Activated B cell treated with CpG ODN at 0.5 μM for 24 hours (primary cell): ENCODE measurements at regions of chr19 and their contacts with region 1.

Region 1: DNA sequence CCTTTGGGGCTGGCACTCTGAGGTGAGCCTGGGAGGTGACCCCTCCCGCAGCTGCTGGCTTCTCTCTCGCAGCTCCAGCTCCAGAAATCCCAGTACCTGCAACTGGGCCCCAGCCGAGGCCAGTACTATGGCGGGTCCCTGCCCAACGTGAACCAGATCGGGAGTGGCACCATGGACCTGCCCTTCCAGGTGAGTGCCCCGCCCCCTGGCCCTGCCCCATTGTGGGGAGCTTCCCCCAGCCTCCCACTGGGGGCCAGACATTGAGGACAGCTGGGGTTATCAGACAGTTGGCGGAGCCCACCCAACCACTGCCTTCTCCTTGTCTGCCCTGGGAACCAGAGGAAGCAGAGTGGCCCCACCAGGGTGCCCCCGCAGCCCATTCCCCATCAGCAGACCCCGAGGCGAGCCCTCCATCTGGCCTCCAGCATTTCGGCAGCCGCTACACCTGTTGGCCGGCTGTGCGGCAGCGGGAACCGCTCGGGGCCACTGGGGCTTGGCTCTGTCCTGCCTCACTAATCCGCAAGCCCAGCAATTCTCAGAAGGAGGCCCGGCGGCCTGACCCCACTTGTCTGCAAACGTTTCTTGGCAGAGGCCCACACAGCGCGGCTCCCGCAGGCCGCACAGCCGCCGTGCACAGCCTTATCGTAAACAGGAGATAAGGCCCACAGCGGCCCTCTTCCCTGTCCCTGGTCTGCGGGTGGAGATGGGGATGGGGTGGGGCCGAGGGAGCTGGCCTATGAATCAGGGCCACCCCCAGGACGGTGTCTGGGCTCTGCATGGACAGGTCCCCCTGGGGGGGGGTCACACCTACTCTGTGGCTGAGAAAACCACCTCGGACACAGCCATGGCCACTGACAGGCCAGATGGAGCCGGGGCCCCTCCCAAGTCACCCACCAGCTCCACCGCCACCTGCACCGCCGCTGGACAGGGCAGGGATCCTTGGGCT is 48.0 kb downstream of the COMP start:
- DNase-seq: no peak
- ATAC-seq: no peak
- H3K4me3 Mint-ChIP-seq: no peak overlapping the region
- H3K27ac Mint-ChIP-seq: no peak overlapping the region
- H3K4me1 Mint-ChIP-seq: no peaks in the 10 kb centered on the region
- H3K27me3 Mint-ChIP-seq: no peaks in the 10 kb centered on the region
- CTCF ChIP-seq: no peak

Region 2: DNA sequence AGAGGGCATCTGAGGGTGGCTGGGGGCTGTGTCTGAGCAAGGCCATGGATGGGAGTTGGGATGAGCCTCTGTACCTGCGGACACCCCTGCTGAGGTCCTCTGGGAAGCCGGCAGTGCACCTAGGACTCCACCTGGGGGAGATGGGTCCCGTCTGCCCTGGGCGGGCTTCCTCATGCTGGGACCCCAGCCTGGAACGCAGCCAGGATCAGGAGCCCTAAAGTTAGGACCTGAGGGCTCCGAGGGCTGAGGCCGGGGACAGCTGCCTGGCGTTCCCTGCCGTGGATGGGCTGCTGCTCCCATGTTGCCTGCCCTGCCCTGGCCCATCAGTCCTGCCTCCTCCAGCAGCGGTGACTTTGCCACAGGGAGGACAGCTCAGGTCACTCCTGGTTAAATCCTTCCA is 33.6 kb before region 1 on chr19:
- CTCF ChIA-PET with region 1: no interaction called
- POLR2A ChIA-PET with region 1: interaction called, 12 read pairs
- intact Hi-C with region 1: no loop called
- DNase-seq: no peak
- ATAC-seq: no peak
- H3K4me3 Mint-ChIP-seq: no peak overlapping the region
- H3K27ac Mint-ChIP-seq: no peak overlapping the region
- H3K4me1 Mint-ChIP-seq: peaks cover 22% of the 10 kb centered on the region
- H3K27me3 Mint-ChIP-seq: no peaks in the 10 kb centered on the region
- CTCF ChIP-seq: no peak